Gastrocnemius medialis (tissue), 4 donors: ENCODE measurements at regions of chr19 and their contacts with region 1.

Region 1: DNA sequence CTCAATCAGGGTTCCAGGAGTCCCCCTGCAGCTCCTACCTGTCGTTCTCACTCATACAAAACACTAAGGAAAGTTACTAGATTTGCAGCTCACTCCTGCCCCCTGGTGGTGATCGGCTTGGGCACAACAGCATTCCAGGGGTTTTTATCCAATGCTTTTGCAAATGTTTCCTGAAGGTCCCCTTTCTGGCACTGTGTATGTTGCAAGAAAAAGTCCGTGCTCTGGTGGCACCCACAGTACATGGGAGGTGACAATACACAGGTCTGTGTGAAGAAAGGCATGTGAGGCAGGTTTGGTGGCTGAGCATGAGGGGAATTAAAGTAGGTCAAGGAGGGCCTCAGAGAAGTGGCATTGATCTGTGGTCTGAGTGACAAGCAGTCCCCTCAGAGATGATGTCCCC is 8.6 kb upstream of the TYK2 start:
- DNase-seq: peak; percentile 64 to 77
- ATAC-seq: peak; percentile 72 to 73
- H3K4me3 ChIP-seq: no peak overlapping the region
- H3K27ac ChIP-seq: no peak overlapping the region
- H3K4me1 ChIP-seq: peaks cover 0 to 7% of the 10 kb centered on the region in 2 donors
- H3K27me3 ChIP-seq: no peaks in the 10 kb centered on the region
- CTCF ChIP-seq: peak; percentile 87 to 96 (median 92)
- POLR2A ChIP-seq: no peak

Region 2: DNA sequence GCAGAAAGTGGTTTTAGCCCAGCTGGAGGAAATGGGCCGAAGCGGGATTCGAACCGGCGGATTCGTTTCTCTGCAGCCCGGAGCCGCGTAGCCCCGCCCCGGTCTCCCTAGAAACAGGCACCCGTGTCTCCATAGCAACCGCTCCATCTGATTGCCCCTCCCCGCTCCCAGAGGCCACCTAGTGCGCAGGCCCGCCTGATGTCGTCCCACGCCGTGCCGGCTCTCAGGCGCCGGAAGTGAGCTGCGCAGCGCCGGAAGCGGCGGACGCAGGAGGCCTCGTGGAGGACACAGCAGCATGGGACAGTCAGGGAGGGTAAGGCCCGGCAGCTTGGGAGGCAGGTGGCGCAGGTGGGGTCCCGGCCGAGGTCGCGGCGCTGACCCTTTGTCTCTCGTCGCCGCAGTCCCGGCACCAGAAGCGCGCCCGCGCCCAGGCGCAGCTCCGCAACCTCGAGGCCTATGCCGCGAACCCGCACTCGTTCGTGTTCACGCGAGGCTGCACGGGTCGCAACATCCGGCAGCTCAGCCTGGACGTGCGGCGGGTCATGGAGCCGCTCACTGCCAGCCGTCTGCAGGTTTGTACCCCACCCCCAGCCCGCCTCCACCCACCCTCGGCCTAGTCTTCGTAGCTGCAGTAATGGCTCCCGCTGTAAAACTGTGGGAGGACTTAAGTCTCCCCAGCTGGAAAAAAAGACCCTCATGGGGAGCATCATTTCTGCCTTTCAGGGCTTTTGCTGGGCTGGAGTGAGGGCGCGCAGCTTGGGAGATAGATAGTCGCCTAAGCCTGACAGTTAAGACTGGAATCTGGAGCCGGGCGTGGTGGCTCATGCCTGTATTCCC is 282.6 kb before region 1 on chr19 and contains the start of gene PPAN:
- in situ Hi-C with region 1: loop called in 1 of 4 experiments (anchors 10 kb)
- intact Hi-C with region 1: loop called (anchors 10 kb)
- DNase-seq: peak; percentile 97 to 98
- ATAC-seq: peak; percentile 94 to 98
- H3K4me3 ChIP-seq: peak within 1 kb of the TSS; percentile 79 to 97 (median 85)
- H3K27ac ChIP-seq: peak within 1 kb of the TSS; percentile 74 to 88 (median 88)
- H3K4me1 ChIP-seq: peaks cover 7 to 15% of the 10 kb centered on the region in 2 donors
- H3K27me3 ChIP-seq: no peaks in the 10 kb centered on the region
- CTCF ChIP-seq: no peak
- POLR2A ChIP-seq: peak; percentile 72 to 83
- total RNA-seq, gene PPAN: 30.5 to 42.3 (median 36.7) TPM

Region 3: DNA sequence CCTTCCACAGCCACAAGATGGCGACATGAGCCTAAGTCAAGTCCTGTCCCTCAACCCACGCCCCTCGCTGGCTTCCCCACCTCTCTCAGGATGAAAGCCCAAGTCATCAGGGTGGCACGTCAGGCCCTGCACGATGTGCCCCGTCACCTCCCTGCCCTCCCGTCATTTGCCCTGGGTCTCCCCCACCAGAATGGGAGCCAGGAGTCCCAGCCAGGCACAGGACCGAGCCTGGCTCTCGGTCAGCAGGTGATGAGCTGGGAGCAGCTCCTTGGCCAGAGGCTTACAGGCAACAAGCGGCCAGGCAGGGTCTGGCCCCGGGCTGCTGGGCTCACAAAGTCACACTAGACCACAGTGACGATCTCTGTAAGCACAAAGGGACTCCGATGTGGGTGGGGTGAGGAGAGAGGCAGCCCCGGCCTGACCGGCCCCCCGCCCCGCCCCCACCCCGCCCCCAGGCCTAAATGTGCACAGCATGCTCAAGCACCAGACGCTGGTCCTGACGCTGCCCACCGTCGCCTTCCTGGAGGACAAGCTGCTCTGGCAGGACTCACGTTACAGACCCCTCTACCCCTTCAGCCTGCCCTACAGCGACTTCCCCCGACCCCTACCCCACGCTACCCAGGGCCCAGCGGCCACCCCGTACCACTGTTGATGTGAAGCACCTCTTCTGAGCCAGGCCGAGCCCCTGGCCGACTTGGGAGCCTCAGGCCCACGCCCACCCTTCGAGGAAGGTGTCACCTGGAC is 129.6 kb before region 1 on chr19:
- in situ Hi-C with region 1: no loop called
- intact Hi-C with region 1: loop called (anchors 2 kb)
- DNase-seq: peak; percentile 28 to 77
- ATAC-seq: peak in 1 of 2 donors; percentile 86
- H3K4me3 ChIP-seq: no peak overlapping the region
- H3K27ac ChIP-seq: peak overlapping the region in 1 of 4 donors; percentile 43
- H3K4me1 ChIP-seq: no peaks in the 10 kb centered on the region
- H3K27me3 ChIP-seq: no peaks in the 10 kb centered on the region
- CTCF ChIP-seq: peak; percentile 16 to 79 (median 63)
- POLR2A ChIP-seq: no peak

Region 4: GRCh38 chr19:10269333-10270179 is 119.4 kb before region 1 on chr19:
- in situ Hi-C with region 1: loop called (anchors 5 kb)
- intact Hi-C with region 1: loop called (anchors 1 kb)
- DNase-seq: peak; percentile 47 to 70
- ATAC-seq: peak; percentile 72 to 75
- H3K4me3 ChIP-seq: peak overlapping the region; percentile 49 to 60 (median 56)
- H3K27ac ChIP-seq: peak overlapping the region; percentile 75 to 84 (median 78)
- H3K4me1 ChIP-seq: peaks cover 5 to 21% of the 10 kb centered on the region in 2 donors
- H3K27me3 ChIP-seq: peaks cover 7 to 24% (median 18%) of the 10 kb centered on the region in 3 donors
- CTCF ChIP-seq: peak; percentile 81 to 94 (median 92)
- POLR2A ChIP-seq: no peak